Activated T-helper 1 cell treated with anti-CD3 and anti-CD28 coated beads, Interleukin-12 subunit alpha, Interleukin-12 subunit beta, Interleukin-2, Interleukin-4 antibody, amounts not matched to agents 30 ng/mL and 10 ng/mL and 1 ng/mL, durations not matched to agents 14 hours and 24 hours and 36 hours (primary cell): ENCODE measurements at regions of chr5 and their contacts with region 1.

Region 1: GRCh38 chr5:103356350-103357091 is 98.0 kb downstream of the MACIR start:
- DNase-seq: no peak
- H3K4me3 Mint-ChIP-seq: no peak overlapping the region
- H3K27ac Mint-ChIP-seq: peak overlapping the region; percentile 58
- H3K4me1 Mint-ChIP-seq: peaks cover 15% of the 10 kb centered on the region
- H3K27me3 Mint-ChIP-seq: peaks cover 4% of the 10 kb centered on the region

Region 2: GRCh38 chr5:103188436-103188835 is 168.1 kb before region 1 on chr5:
- intact Hi-C with region 1: no loop called
- DNase-seq: no peak
- H3K4me3 Mint-ChIP-seq: no peak overlapping the region
- H3K27ac Mint-ChIP-seq: no peak overlapping the region
- H3K4me1 Mint-ChIP-seq: peaks cover 15% of the 10 kb centered on the region
- H3K27me3 Mint-ChIP-seq: no peaks in the 10 kb centered on the region

Region 3: GRCh38 chr5:103340717-103341388 is 15.7 kb before region 1 on chr5:
- intact Hi-C with region 1: loop called (anchors 1 kb)
- DNase-seq: no peak
- H3K4me3 Mint-ChIP-seq: no peak overlapping the region
- H3K27ac Mint-ChIP-seq: no peak overlapping the region
- H3K4me1 Mint-ChIP-seq: peaks cover 13% of the 10 kb centered on the region
- H3K27me3 Mint-ChIP-seq: peaks cover 11% of the 10 kb centered on the region